Cardiac septum (tissue), 1 donor: ENCODE measurements at regions of chr1 and their contacts with region 1.

Region 1: DNA sequence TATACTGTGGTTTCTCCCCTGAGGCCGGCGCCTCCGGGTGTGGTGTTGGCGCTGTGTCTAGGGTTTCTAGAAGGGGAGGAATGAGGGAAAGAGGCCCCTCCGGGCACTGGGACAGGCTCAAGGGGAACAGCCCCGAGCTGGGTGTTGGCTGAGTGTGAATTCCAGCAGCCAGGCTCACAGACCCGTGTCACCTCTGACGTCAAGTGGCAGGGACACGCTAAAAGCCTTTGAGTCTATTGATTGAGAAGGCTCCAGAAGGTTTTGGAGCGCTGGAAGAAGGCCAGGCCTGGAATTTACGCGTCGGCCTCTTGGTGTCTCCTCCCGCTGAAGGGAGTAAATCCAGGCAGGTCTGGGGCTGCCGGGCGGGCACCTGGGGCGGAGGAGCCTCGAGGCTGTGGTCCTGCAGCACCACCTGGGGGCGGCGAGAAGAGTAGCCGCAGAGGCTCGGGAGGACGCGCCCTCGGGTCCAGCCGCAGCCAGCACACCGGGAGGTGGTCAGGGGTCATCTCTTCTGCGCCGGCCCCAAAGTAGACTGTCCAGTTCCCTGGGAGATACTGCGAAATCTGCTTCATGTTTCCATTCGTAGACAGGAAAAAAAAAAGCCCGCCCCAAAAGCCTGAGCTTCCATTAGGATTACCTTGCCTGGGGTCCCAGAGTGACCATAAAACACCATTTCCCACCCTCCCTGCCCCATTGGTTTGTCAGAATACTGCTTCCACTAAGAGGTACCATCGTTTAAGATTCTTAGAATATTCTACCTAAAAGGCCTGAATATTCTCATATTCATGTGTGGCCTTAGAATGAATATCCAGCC is 61.7 kb downstream of the TLR5 start:
- DNase-seq: peak; percentile 91

Region 2: GRCh38 chr1:222465211-222466041 is 616.0 kb before region 1 on chr1:
- intact Hi-C with region 1: loop called (anchors 10 kb)
- DNase-seq: peak; percentile 93

Region 3: GRCh38 chr1:222736972-222737371 is 344.4 kb before region 1 on chr1 and contains the start of gene FAM177B:
- intact Hi-C with region 1: loop called (anchors 1 kb)
- DNase-seq: no peak
- total RNA-seq, gene FAM177B: not detected

Region 4: DNA sequence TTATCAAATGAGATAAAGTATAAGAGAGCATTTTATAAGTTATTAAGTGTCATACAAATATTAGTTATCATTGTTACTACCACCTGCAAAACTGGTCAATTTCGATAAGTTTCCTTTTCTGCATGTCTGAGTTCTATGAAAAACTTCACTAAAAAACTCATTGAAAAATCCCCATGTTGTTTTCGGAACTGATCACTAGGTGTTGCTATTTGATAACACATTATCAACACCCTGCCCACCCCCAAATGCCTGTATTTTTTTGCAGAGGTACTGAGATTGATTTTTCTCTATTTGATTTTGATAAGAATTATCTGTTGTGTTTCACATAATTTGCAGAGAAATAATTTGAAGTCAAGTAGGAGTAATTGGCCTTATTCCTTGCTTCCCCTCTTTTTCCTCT is 288.6 kb before region 1 on chr1:
- intact Hi-C with region 1: loop called (anchors 2 kb)
- DNase-seq: no peak

Region 5: GRCh38 chr1:223123011-223123610 is 41.7 kb after region 1 on chr1:
- intact Hi-C with region 1: loop called (anchors 5 kb)
- DNase-seq: no peak

Region 6: GRCh38 chr1:223161321-223161720 is 79.9 kb after region 1 on chr1:
- intact Hi-C with region 1: no loop called
- DNase-seq: no peak